Posterior vena cava (tissue), 2 donors: ENCODE measurements at regions of chr1 and their contacts with region 1.

Region 1: GRCh38 chr1:202968840-202969295 is 1.8 kb upstream of the CYB5R1 start:
- DNase-seq: no peak

Region 2: DNA sequence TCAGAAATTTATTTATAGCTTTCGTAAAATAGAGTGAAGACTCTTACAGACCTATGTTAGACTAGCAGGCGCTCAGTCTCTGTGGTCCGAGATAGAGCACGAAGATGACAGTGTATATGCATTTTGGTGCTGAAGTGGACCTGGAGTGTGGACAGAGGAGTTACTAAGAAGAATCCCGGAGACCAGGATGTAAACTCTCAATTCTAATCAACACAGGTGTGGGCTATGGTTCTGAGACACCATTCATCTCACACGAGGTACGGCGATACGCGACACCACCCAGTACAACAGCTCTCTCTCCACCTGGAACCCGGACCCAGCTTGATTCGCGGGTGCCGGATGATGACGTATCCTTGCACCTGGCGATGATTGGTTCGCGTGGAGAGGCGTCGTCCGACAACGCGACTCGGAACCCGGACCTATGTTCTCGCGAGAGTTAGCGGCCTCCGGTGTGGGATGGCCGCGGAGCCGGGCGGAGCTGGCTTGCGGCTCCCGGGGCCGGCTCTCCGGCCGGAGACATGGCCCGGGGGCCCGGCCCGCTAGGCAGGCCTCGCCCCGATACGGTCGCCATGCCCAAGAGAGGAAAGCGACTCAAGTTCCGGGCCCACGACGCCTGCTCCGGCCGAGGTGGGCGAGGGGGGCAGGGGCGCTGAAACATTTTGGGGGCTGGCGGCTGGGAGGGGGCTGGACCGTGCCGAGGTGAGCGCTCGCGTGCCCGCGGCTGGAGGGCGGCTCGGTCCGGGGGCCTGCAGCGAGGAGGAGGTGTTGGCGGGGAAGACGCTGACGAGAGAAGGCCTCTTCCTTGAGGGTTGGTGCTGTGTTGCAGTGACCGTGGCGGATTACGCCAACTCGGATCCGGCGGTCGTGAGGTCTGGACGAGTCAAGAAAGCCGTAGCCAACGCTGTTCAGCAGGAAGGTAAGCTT is 38.3 kb after region 1 on chr1 and contains the start of gene TMEM183A:
- intact Hi-C with region 1: no loop called
- DNase-seq: peak; percentile 99
- total RNA-seq, gene TMEM183A: 40.8 to 43.5 TPM

Region 3: GRCh38 chr1:203818399-203818798 is 849.5 kb after region 1 on chr1:
- intact Hi-C with region 1: loop called in 1 of 2 experiments (anchors 10 kb)
- DNase-seq: no peak